Natural killer cell (primary cell): ENCODE measurements at regions of chr3 and their contacts with region 1.

Region 1: GRCh38 chr3:163011590-163011989 is 1515.0 kb downstream of the OTOL1 start:
- DNase-seq: no peak
- ATAC-seq: no peak
- H3K4me3 ChIP-seq: no peak overlapping the region
- H3K4me3 Mint-ChIP-seq: no peak overlapping the region
- H3K27ac ChIP-seq: no peak overlapping the region
- H3K27ac Mint-ChIP-seq: no peak overlapping the region
- H3K4me1 ChIP-seq: no peaks in the 10 kb centered on the region
- H3K4me1 Mint-ChIP-seq: no peaks in the 10 kb centered on the region
- H3K27me3 ChIP-seq: no peaks in the 10 kb centered on the region
- H3K27me3 Mint-ChIP-seq: no peaks in the 10 kb centered on the region
- CTCF ChIP-seq: no peak

Region 2: DNA sequence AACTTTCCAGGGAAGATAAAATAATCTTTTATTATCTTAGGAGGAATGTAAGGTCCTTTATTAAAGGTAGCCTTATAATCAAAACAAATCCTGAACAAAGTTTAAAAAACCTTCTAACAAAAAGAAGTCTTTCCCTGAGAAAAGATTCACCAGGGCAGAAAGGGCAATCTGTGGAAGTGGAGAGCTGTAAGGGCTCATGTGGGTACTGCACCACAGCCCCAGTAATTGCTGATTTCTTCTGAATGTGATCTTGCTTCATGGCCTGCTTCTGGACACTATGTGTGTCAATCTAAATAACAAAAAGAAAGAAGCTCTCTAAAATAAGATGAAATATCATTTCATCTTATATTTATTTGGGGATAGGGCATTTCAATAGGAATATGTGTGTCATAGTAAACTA is 13.4 kb before region 1 on chr3:
- intact Hi-C with region 1: loop called (anchors 1 kb)
- DNase-seq: no peak
- ATAC-seq: no peak
- H3K4me3 ChIP-seq: no peak overlapping the region
- H3K4me3 Mint-ChIP-seq: no peak overlapping the region
- H3K27ac ChIP-seq: no peak overlapping the region
- H3K27ac Mint-ChIP-seq: no peak overlapping the region
- H3K4me1 ChIP-seq: no peaks in the 10 kb centered on the region
- H3K4me1 Mint-ChIP-seq: no peaks in the 10 kb centered on the region
- H3K27me3 ChIP-seq: no peaks in the 10 kb centered on the region
- H3K27me3 Mint-ChIP-seq: no peaks in the 10 kb centered on the region
- CTCF ChIP-seq: no peak

Region 3: GRCh38 chr3:163391407-163392181 is 380.0 kb after region 1 on chr3:
- intact Hi-C with region 1: no loop called
- DNase-seq: no peak
- ATAC-seq: no peak
- H3K4me3 ChIP-seq: no peak overlapping the region
- H3K4me3 Mint-ChIP-seq: no peak overlapping the region
- H3K27ac ChIP-seq: no peak overlapping the region
- H3K27ac Mint-ChIP-seq: no peak overlapping the region
- H3K4me1 ChIP-seq: no peaks in the 10 kb centered on the region
- H3K4me1 Mint-ChIP-seq: no peaks in the 10 kb centered on the region
- H3K27me3 ChIP-seq: no peaks in the 10 kb centered on the region
- H3K27me3 Mint-ChIP-seq: no peaks in the 10 kb centered on the region
- CTCF ChIP-seq: no peak